ENCODE measurements at regions of chrX and their contacts with region 1.

Region 1: GRCh38 chrX:1246816-1247215 is 21.8 kb upstream of the CSF2RA start:
- DNase-seq: peak; percentile 91
- H3K4me3 Mint-ChIP-seq: no peak overlapping the region
- H3K27ac Mint-ChIP-seq: peak overlapping the region; percentile 69
- H3K4me1 Mint-ChIP-seq: peaks cover 29% of the 10 kb centered on the region
- H3K27me3 Mint-ChIP-seq: no peaks in the 10 kb centered on the region

Region 2: GRCh38 chrX:776532-777280 is 470.1 kb before region 1 on chrX:
- CTCF ChIA-PET with region 1: no interaction called
- POLR2A ChIA-PET with region 1: no interaction called
- intact Hi-C with region 1: no loop called
- DNase-seq: no peak
- H3K4me3 Mint-ChIP-seq: no peak overlapping the region
- H3K27ac Mint-ChIP-seq: no peak overlapping the region
- H3K4me1 Mint-ChIP-seq: no peaks in the 10 kb centered on the region
- H3K27me3 Mint-ChIP-seq: no peaks in the 10 kb centered on the region

Region 3: DNA sequence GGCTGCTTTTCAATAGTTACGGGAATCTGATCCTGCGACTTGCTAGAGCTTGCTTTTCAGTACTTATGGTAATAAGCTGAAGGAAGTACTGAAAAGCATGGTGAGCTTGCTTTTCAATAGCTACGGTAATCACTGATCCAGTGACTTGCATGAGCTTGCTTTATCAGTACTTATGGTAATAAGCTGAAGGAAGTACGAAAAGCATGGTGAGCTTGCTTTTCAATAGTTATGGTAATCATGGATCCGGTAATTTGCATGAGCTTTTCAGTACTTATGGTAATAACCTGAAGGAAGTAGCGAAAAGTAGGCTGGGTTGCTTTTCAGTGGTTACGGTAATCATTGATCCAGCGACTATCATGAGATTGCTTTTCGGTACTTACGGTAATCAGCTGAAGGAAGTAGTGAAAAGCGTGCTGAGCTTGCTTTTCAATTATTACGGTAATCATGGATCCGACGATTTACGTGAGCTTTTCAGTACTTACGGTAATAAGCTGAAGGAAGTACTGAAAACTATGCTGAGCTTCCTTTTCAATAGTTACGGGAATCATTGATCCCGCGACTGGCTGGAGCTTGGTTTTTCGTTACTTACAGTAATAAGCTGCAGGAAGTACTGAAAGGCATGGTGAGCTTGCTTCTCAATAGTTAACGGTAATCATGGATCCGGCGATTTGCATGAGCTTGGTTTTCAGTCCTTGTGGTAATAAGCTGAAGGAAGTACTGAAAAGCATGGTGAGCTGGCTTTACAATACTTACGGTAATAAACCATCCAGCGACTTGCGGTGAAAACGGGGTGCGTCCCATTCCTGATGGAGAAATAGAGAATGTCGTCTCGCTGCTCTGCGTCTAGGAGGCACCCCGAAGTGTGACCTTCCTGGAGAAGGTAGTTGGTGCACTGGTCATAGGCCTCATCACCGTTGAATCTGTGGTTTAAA is 40.9 kb before region 1 on chrX:
- CTCF ChIA-PET with region 1: no interaction called
- POLR2A ChIA-PET with region 1: no interaction called
- intact Hi-C with region 1: loop called (anchors 1 kb)
- DNase-seq: peak; percentile 50
- H3K4me3 Mint-ChIP-seq: peak overlapping the region; percentile 62
- H3K27ac Mint-ChIP-seq: peak overlapping the region; percentile 30
- H3K4me1 Mint-ChIP-seq: peaks cover 34% of the 10 kb centered on the region
- H3K27me3 Mint-ChIP-seq: peaks cover 3% of the 10 kb centered on the region

Region 4: DNA sequence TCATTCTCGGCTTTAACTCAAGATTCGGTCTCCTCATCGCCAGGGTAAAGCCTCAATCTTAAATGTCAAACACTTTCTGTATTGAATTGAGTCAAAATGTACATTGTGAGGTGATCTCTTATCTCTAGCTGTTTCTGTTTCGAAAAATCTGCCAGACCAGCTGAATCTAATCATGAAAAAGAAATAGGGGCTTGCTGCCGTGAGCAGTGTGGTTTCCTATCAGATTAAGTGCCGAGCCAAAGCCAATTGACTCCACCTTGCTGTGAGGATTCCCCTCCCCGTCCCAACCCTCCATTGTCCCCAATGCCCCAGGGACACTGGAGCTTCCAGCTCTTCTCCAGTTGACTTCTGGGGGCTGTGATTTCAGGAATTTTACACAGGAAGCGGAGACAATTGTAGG is 21.9 kb before region 1 on chrX:
- CTCF ChIA-PET with region 1: no interaction called
- POLR2A ChIA-PET with region 1: no interaction called
- intact Hi-C with region 1: loop called (anchors 2 kb)
- DNase-seq: peak; percentile 39
- H3K4me3 Mint-ChIP-seq: no peak overlapping the region
- H3K27ac Mint-ChIP-seq: no peak overlapping the region
- H3K4me1 Mint-ChIP-seq: peaks cover 6% of the 10 kb centered on the region
- H3K27me3 Mint-ChIP-seq: no peaks in the 10 kb centered on the region

Region 5: DNA sequence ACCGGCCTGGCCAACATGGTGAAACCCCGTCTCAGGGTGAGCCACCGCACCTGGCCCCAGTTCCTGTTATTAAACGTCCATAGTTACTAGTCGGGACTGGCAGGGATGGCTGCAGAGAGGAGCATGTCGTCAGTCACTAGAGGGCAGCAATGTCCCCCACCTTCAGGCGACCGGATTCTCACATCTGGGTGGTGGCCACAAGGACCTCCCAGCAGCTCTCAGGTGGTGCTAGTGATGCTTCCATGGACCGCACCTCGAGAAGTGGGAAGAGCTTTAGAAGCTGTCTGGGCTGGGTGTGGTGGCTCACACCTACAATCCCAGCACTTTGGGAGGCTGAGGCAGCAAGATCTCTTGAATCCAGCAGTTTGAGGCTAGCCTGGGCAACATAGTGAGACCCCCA is 76.5 kb after region 1 on chrX:
- CTCF ChIA-PET with region 1: no interaction called
- POLR2A ChIA-PET with region 1: no interaction called
- intact Hi-C with region 1: loop called (anchors 5 kb)
- DNase-seq: peak; percentile 82
- H3K4me3 Mint-ChIP-seq: no peak overlapping the region
- H3K27ac Mint-ChIP-seq: peak overlapping the region; percentile 9
- H3K4me1 Mint-ChIP-seq: peaks cover 15% of the 10 kb centered on the region
- H3K27me3 Mint-ChIP-seq: peaks cover 11% of the 10 kb centered on the region

Region 6: DNA sequence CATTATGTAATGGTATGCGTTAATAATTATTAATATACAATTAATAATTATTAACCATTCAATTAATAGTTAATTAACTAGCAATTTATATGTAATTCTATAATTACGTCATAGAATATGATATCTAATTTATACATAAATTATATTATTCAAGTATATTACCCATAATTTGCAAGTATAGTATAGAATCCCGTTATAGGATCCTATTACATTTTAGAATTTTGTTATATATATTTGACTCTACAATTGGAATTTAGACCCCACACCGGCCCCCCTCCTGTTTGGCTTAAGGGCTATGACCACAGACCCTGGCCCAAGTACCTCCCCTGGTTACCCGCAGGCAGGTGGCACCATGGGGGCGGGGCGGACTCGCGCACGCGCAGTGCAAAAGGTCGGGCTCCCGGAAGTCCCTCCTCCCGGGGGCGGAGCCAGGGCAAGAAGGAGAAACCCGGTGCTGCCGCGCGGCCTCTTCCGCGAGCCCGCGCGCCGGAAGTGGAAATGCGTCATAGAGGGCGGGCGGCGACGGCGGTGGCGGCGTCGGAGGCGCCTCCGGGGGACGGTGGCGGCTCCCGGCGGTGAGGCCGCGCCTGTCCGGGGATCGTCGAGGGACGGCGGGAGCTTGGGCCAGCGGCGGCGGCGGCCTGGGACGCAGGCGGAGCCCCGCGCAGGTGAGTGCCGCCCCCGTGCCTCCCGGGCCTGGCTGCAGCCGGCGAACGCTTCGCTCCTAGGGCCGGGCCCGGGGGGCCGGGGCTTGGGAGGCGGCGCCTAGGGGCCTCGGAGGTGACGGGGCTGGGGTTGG is 344.5 kb after region 1 on chrX and contains the start of gene AKAP17A:
- CTCF ChIA-PET with region 1: no interaction called
- POLR2A ChIA-PET with region 1: no interaction called
- intact Hi-C with region 1: loop called (anchors 5 kb)
- DNase-seq: peak; percentile 99
- H3K4me3 Mint-ChIP-seq: peak within 1 kb of the TSS; percentile 92
- H3K27ac Mint-ChIP-seq: peak within 1 kb of the TSS; percentile 89
- H3K4me1 Mint-ChIP-seq: peaks cover 31% of the 10 kb centered on the region
- H3K27me3 Mint-ChIP-seq: no peaks in the 10 kb centered on the region
- total RNA-seq, gene AKAP17A: 59.4 to 62.9 TPM